Activated CD4-positive, alpha-beta T cell treated with anti-CD3 and anti-CD28 coated beads for 36 hours (primary cell): ENCODE measurements at regions of chr22 and their contacts with region 1.

Region 1: GRCh38 chr22:37260901-37261336 is 16.9 kb upstream of the RAC2 start:
- DNase-seq: peak; percentile 80
- ATAC-seq: peak; percentile 75
- H3K4me3 Mint-ChIP-seq: no peak overlapping the region
- H3K27ac Mint-ChIP-seq: peak overlapping the region; percentile 15
- H3K4me1 Mint-ChIP-seq: peaks cover 29% of the 10 kb centered on the region
- H3K27me3 Mint-ChIP-seq: no peaks in the 10 kb centered on the region

Region 2: GRCh38 chr22:36986242-36986821 is 274.6 kb before region 1 on chr22:
- CTCF ChIA-PET with region 1: interaction called, 4 read pairs
- POLR2A ChIA-PET with region 1: no interaction called
- intact Hi-C with region 1: loop called (anchors 1 to 5 kb)
- DNase-seq: peak; percentile 81
- ATAC-seq: peak; percentile 83
- H3K4me3 Mint-ChIP-seq: no peak overlapping the region
- H3K27ac Mint-ChIP-seq: no peak overlapping the region
- H3K4me1 Mint-ChIP-seq: peaks cover 6% of the 10 kb centered on the region
- H3K27me3 Mint-ChIP-seq: peaks cover 24% of the 10 kb centered on the region

Region 3: GRCh38 chr22:37019309-37020125 is 241.4 kb before region 1 on chr22 and contains the starts of genes MPST and TST:
- CTCF ChIA-PET with region 1: no interaction called
- POLR2A ChIA-PET with region 1: no interaction called
- intact Hi-C with region 1: no loop called
- DNase-seq: peak; percentile 60
- ATAC-seq: peak; percentile 74
- H3K4me3 Mint-ChIP-seq: peak within 1 kb of the TSS; percentile 78
- H3K27ac Mint-ChIP-seq: peak within 1 kb of the TSS; percentile 52
- H3K4me1 Mint-ChIP-seq: peaks cover 4% of the 10 kb centered on the region
- H3K27me3 Mint-ChIP-seq: peaks cover 13% of the 10 kb centered on the region
- total RNA-seq, gene MPST: 10.6 to 11.0 TPM
- total RNA-seq, gene TST: 1.8 to 2.1 TPM

Region 4: GRCh38 chr22:37077884-37078485 is 182.9 kb before region 1 on chr22:
- CTCF ChIA-PET with region 1: interaction called, 3 read pairs
- POLR2A ChIA-PET with region 1: no interaction called
- intact Hi-C with region 1: loop called (anchors 1 to 5 kb)
- DNase-seq: peak; percentile 94
- ATAC-seq: peak; percentile 18
- H3K4me3 Mint-ChIP-seq: no peak overlapping the region
- H3K27ac Mint-ChIP-seq: peak overlapping the region; percentile 94
- H3K4me1 Mint-ChIP-seq: peaks cover 59% of the 10 kb centered on the region
- H3K27me3 Mint-ChIP-seq: peaks cover 10% of the 10 kb centered on the region

Region 5: GRCh38 chr22:37183432-37184361 is 77.2 kb before region 1 on chr22:
- CTCF ChIA-PET with region 1: no interaction called
- POLR2A ChIA-PET with region 1: no interaction called
- intact Hi-C with region 1: no loop called
- DNase-seq: no peak
- ATAC-seq: peak; percentile 27
- H3K4me3 Mint-ChIP-seq: no peak overlapping the region
- H3K27ac Mint-ChIP-seq: no peak overlapping the region
- H3K4me1 Mint-ChIP-seq: peaks cover 18% of the 10 kb centered on the region
- H3K27me3 Mint-ChIP-seq: no peaks in the 10 kb centered on the region

Region 6: DNA sequence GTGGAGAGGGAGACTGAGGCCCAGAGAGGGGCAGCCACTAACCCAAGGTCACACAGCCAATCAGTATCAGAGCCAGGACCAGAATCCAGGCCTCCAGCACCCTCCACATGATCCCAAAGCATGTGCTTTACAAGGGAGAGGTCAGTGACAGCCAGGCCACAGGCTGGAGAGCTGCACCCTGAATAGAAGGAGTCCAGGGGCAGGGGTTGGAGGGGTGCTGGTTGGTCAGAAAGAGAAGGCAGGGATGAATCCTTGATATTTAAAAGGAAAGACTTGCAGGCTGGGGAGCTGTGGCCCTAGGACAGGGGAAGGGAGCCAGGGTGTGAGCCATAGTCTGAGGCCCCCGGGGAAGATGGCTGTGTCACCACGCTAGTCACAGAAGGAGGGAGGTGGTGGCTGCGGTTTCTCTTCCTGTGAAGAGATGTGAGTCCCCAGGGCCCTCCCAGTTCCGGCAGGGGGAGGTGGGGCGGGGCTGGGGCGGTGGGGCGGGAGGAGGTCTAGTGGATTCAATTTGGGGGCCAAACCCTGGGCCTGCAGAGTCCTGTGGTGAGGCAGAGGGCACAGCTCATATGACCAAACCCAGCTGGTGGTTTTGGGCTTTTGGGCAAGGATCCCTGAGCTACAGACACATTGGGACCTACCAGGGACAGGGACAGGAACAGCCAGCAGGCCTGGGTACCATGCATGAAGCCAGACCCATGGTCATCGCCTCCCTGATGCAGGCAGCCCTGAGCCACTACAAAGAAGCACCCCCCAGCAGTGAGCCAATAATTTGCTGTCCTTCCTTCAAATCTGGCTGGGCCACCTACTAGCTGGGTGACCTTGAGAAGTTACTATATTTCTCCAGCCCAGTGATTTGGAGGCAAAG is 30.9 kb before region 1 on chr22:
- CTCF ChIA-PET with region 1: interaction called, 24 read pairs
- POLR2A ChIA-PET with region 1: no interaction called
- intact Hi-C with region 1: no loop called
- DNase-seq: peak; percentile 97
- ATAC-seq: peak; percentile 69
- H3K4me3 Mint-ChIP-seq: peak overlapping the region; percentile 92
- H3K27ac Mint-ChIP-seq: peak overlapping the region; percentile 99
- H3K4me1 Mint-ChIP-seq: peaks cover 90% of the 10 kb centered on the region
- H3K27me3 Mint-ChIP-seq: no peaks in the 10 kb centered on the region

Region 7: DNA sequence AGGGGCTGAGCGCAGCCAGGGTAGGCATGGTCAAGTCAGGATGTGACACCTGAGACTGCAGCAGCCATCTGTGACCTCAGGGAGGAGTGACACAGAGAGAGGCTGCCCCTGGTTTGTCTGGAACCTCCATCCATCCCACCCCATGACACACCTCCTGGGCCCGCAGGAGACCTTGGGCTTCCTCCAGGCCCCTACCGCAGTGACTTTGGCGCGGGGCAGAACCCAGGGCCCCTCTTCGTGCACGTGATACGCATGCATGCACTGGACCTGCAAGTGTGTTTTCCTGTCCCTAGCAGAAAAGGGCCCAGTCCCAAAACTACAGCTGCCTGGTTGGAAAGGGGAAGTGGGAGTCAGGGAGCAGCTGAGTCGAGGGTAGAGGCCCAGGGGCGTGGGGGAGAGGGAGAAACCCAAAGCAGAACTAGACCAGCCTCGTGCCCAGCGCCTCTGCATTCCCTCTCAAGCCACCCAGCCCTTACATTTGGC is 13.5 kb after region 1 on chr22:
- CTCF ChIA-PET with region 1: interaction called, 16 read pairs
- POLR2A ChIA-PET with region 1: no interaction called
- intact Hi-C with region 1: no loop called
- DNase-seq: no peak
- ATAC-seq: no peak
- H3K4me3 Mint-ChIP-seq: no peak overlapping the region
- H3K27ac Mint-ChIP-seq: peak overlapping the region; percentile 45
- H3K4me1 Mint-ChIP-seq: peaks cover 53% of the 10 kb centered on the region
- H3K27me3 Mint-ChIP-seq: no peaks in the 10 kb centered on the region

Region 8: GRCh38 chr22:37282385-37282677 is 21.4 kb after region 1 on chr22 and contains the start of gene CYTH4:
- CTCF ChIA-PET with region 1: interaction called, 30 read pairs
- POLR2A ChIA-PET with region 1: interaction called, 3 read pairs
- intact Hi-C with region 1: loop called in 1 of 2 experiments (anchors 2 kb)
- DNase-seq: peak; percentile 93
- ATAC-seq: peak; percentile 87
- H3K4me3 Mint-ChIP-seq: peak within 1 kb of the TSS; percentile 82
- H3K27ac Mint-ChIP-seq: peak within 1 kb of the TSS; percentile 98
- H3K4me1 Mint-ChIP-seq: peaks cover 60% of the 10 kb centered on the region
- H3K27me3 Mint-ChIP-seq: no peaks in the 10 kb centered on the region
- total RNA-seq, gene CYTH4: 33.1 to 42.8 TPM